Common myeloid progenitor, CD34-positive (primary cell): ENCODE measurements at regions of chr3 and their contacts with region 1.

Region 1: DNA sequence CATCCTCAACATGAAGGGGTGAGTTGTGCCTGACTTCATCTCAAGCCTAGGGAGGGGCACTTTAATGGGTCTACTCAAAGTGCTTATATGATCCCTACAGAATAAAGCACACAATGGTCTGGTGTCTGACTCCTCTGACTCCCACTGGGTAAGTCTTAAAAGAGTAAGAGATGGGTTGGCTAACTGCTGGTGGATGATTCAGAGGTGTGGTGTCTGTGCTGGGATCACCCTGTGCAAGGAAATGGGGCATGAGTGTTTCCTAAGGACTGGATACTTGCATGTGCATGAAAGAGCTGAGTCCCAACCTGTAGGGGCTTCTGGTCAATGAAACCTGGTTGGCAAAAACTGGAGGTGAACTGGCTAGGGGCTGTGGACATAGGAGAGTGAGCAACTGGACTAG is 158.8 kb downstream of the IL20RB start:
- DNase-seq: no peak
- H3K4me3 ChIP-seq: no peak overlapping the region
- H3K27ac ChIP-seq: no peak overlapping the region
- H3K4me1 ChIP-seq: no peaks in the 10 kb centered on the region
- H3K27me3 ChIP-seq: peaks cover 0 to 8% (median 0%) of the 10 kb centered on the region in 5 experiments

Region 2: GRCh38 chr3:137105277-137105977 is 11.2 kb before region 1 on chr3:
- CTCF ChIA-PET with region 1: interaction called, 19 read pairs
- POLR2A ChIA-PET with region 1: no interaction called
- DNase-seq: peak; percentile 76 to 90 (median 84)
- H3K4me3 ChIP-seq: peak overlapping the region in 4 of 7 experiments; percentile 5 to 45 (median 23)
- H3K27ac ChIP-seq: no peak overlapping the region
- H3K4me1 ChIP-seq: peaks cover 0 to 3% (median 0%) of the 10 kb centered on the region in 4 experiments
- H3K27me3 ChIP-seq: peaks cover 0 to 15% (median 9%) of the 10 kb centered on the region in 5 experiments

Region 3: DNA sequence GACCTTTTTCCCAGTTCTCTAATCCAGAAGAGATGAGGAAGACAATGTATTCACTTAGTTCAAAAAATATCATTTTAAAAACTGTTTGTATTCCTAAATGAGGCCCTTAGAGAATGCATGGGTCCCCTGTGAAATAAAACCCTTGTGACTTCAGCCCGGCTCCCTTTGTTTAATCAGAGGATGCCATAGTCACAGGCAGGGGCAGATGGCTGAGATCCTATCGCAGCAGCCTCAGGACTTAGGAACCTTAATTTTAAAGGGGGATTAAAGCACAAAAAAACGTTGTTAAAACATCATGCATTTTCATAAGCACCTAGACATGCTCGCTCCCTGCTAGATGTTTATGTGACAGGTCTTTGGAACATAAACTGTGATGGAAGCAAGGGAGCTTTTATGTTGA is 17.8 kb after region 1 on chr3:
- CTCF ChIA-PET with region 1: no interaction called
- POLR2A ChIA-PET with region 1: no interaction called
- DNase-seq: no peak
- H3K4me3 ChIP-seq: no peak overlapping the region
- H3K27ac ChIP-seq: no peak overlapping the region
- H3K4me1 ChIP-seq: no peaks in the 10 kb centered on the region
- H3K27me3 ChIP-seq: peaks cover 0 to 2% (median 0%) of the 10 kb centered on the region in 5 experiments